Heart left ventricle (tissue), 16 donors: ENCODE measurements at regions of chr3 and their contacts with region 1.

Region 1: DNA sequence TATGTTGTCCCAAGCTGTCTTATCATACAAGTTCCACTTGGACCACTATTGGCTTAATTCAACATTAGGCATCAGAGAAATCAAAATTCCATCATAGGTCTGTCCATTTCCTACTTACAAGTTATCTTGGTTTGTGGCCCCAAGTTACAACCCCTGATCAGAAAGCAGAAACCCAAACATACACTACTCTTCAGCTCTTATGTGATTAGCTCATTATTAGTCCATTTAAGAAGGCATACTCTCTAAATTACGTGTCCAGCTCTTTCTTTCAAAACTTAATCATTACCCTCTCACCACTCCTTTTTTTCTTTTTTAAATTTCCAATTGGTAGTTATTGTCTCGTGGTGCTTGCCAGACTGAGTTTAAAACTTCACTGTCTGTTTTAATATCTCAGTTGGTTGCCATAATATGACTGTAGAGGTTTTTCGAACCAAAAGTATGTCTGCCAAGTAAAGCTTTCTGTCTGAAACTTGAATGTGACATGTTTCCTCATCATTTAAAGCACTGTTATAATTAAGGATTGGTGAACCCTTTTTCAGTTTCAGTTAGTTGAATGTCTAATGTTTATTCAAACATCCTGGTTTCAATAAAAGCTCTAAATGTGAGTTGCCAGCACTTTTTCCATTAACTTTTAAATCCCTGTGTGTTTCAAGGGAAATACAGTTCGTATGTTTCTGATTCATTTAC is 150.3 kb downstream of the SAMMSON start:
- DNase-seq: no peak
- ATAC-seq: no peak
- H3K4me3 ChIP-seq: no peak overlapping the region
- H3K27ac ChIP-seq: no peak overlapping the region
- H3K4me1 ChIP-seq: no peaks in the 10 kb centered on the region
- H3K27me3 ChIP-seq: no peaks in the 10 kb centered on the region
- CTCF ChIP-seq: no peak
- POLR2A ChIP-seq: no peak

Region 2: GRCh38 chr3:70120357-70121121 is 29.3 kb before region 1 on chr3:
- intact Hi-C with region 1: loop called in 1 of 10 experiments (anchors 2 kb)
- DNase-seq: peak in 4 of 5 donors; percentile 23 to 59 (median 35)
- ATAC-seq: no peak
- H3K4me3 ChIP-seq: no peak overlapping the region
- H3K27ac ChIP-seq: no peak overlapping the region
- H3K4me1 ChIP-seq: no peaks in the 10 kb centered on the region
- H3K27me3 ChIP-seq: no peaks in the 10 kb centered on the region
- CTCF ChIP-seq: peak in 11 of 12 donors; percentile 15 to 58 (median 27)
- POLR2A ChIP-seq: no peak

Region 3: GRCh38 chr3:70392227-70392626 is 242.4 kb after region 1 on chr3:
- intact Hi-C with region 1: no loop called
- DNase-seq: no peak
- ATAC-seq: no peak
- H3K4me3 ChIP-seq: no peak overlapping the region
- H3K27ac ChIP-seq: no peak overlapping the region
- H3K4me1 ChIP-seq: no peaks in the 10 kb centered on the region
- H3K27me3 ChIP-seq: no peaks in the 10 kb centered on the region
- CTCF ChIP-seq: no peak
- POLR2A ChIP-seq: no peak